ENCODE measurements at regions of chr11 and their contacts with region 1.

Region 1: DNA sequence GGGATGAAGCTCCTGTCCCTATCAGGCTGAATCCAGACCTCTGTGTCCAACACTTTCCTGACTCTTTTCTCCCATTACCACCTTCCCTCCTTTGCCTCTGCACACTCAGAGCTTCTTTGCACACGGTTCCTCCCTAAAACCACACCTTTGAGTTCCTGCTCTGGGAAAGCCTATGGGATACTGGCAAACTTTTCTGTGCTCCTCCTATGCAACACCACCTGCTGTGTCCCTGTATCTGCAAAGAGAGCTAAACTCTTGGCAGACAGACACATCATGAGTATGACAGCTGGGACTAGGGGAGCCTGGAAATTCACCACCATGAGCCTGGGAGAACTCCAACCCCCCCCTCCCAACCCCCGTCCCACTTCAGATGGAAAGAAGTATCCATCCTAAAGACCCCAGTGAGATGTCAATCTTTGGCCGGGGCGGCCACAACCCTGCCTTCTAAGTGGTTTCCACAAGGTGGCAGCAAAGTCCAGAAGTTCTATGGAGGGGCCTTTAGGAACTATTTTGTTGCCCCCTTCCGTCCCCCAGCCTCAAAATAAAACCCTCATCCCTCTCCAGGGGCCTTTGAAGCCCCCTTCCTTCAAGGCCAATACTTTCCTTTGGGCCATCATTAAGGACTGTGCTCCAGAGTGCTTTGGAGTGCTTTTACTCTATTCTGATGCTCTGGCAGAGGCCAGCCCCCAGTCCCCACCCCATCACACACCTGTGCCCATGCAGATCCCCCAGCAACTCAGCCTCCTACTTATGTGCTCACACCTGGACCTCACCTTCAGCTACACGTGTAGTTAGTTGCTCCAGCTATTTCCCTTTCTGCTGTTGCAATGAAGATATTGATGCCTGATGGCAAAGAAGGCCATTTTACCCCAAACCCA is 19.4 kb downstream of the HTR3A start:
- DNase-seq: no peak
- H3K4me3 ChIP-seq: no peak overlapping the region
- H3K27ac ChIP-seq: no peak overlapping the region
- H3K4me1 ChIP-seq: no peaks in the 10 kb centered on the region
- H3K27me3 ChIP-seq: no peaks in the 10 kb centered on the region
- CTCF ChIP-seq: peak; percentile 51 to 73

Region 2: DNA sequence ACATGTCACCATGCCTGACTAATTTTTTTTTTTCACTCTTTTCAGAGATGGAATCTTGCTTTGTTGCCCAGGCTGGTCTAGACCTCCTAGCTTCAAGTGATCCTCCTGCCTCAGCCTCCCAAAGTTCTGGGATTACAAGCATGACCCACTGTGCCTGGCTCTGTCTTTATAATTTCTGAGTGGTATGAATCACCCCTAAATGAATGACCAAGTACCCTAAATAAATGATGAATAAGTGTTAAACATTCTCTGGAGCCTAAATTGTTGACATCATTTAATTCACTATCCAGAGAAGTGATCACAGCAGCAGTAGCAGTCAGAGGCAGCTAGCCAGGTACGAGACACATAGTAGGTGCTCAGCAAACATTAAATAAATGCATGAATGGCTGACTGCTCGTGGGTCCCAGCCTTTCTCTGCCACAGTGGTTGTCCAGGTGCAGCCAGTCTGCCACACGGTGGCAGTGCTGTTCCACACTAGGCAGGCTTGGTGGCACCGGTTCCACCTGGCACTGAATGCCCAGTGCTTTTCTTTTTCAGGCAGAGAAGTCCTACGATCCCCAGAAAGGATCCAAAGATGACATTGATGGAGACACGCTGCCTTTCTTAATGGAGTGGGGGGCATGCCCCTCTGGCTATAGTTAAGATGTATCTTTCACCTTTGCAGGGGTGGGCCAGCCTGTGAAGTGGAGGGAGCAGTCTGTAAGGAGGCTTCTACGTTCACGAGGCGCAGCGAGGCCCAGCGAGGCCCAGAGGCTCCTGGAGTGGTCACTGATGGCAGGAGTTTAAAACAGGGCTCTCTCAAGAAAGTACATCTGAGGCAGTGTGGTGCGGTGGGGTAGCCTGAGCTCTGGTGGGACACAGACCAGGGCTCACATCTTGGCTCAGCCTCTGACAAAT is 688.6 kb before region 1 on chr11:
- CTCF ChIA-PET with region 1: no interaction called
- dilution Hi-C with region 1: no loop called
- in situ Hi-C with region 1: no loop called
- intact Hi-C with region 1: loop called (anchors 10 kb)
- DNase-seq: peak; percentile 61
- H3K4me3 ChIP-seq: no peak overlapping the region
- H3K27ac ChIP-seq: no peak overlapping the region
- H3K4me1 ChIP-seq: peaks cover 13% of the 10 kb centered on the region
- H3K27me3 ChIP-seq: no peaks in the 10 kb centered on the region
- CTCF ChIP-seq: peak; percentile 99

Region 3: DNA sequence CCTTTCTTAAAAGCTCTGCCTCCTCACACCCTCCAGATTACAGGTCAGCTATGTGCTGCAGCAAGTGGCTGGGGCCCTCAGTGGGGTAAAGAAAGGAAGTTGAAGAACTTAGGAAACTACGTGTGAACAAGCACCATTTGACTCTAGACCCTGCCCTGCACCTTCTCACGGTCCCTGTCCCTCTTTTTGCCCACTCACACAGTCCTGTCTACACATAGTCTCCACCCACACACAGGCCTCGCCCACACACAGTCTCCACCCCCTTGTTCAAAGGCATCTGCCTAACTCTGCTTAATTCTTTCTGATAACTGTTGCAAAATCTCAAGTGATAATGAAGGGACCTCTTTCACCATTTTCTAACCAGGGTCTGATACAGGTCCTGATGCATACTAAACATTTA is 347.2 kb before region 1 on chr11:
- CTCF ChIA-PET with region 1: no interaction called
- dilution Hi-C with region 1: no loop called
- in situ Hi-C with region 1: no loop called
- intact Hi-C with region 1: no loop called
- DNase-seq: no peak
- H3K4me3 ChIP-seq: no peak overlapping the region
- H3K27ac ChIP-seq: no peak overlapping the region
- H3K4me1 ChIP-seq: no peaks in the 10 kb centered on the region
- H3K27me3 ChIP-seq: no peaks in the 10 kb centered on the region
- CTCF ChIP-seq: no peak

Region 4: GRCh38 chr11:113896156-113896879 is 98.0 kb before region 1 on chr11:
- CTCF ChIA-PET with region 1: no interaction called
- dilution Hi-C with region 1: no loop called
- in situ Hi-C with region 1: no loop called
- intact Hi-C with region 1: loop called (anchors 10 kb)
- DNase-seq: no peak
- H3K4me3 ChIP-seq: no peak overlapping the region
- H3K27ac ChIP-seq: no peak overlapping the region
- H3K4me1 ChIP-seq: no peaks in the 10 kb centered on the region
- H3K27me3 ChIP-seq: no peaks in the 10 kb centered on the region
- CTCF ChIP-seq: peak; percentile 68 to 74

Region 5: DNA sequence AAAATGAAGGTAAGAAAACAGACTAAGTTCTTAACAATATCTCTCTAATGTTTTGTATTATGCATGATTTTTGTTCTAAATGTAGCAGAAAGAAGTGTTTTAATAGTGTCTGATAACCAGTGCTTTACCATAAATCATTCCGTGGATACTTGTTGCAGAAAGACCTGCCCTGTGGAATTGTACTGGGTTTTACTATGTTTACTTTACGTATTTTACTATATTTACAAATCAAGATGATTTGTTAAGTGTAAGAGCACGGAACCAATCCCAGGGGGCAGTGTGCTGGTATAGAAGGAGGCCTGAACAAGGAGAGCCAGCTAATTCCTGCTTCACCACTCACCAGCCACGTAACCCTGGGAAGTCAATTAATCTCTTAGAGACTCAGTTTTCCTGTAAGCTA is 88.3 kb before region 1 on chr11:
- CTCF ChIA-PET with region 1: no interaction called
- dilution Hi-C with region 1: loop called (anchors 5 kb)
- in situ Hi-C with region 1: no loop called
- intact Hi-C with region 1: no loop called
- DNase-seq: no peak
- H3K4me3 ChIP-seq: no peak overlapping the region
- H3K27ac ChIP-seq: no peak overlapping the region
- H3K4me1 ChIP-seq: no peaks in the 10 kb centered on the region
- H3K27me3 ChIP-seq: peaks cover 14% of the 10 kb centered on the region
- CTCF ChIP-seq: no peak

Region 6: GRCh38 chr11:114109206-114110090 is 115.1 kb after region 1 on chr11:
- CTCF ChIA-PET with region 1: no interaction called
- dilution Hi-C with region 1: no loop called
- in situ Hi-C with region 1: no loop called
- intact Hi-C with region 1: no loop called
- DNase-seq: no peak
- H3K4me3 ChIP-seq: no peak overlapping the region
- H3K27ac ChIP-seq: no peak overlapping the region
- H3K4me1 ChIP-seq: no peaks in the 10 kb centered on the region
- H3K27me3 ChIP-seq: peaks cover 7% of the 10 kb centered on the region
- CTCF ChIP-seq: no peak

Region 7: GRCh38 chr11:114159802-114160632 is 165.7 kb after region 1 on chr11:
- CTCF ChIA-PET with region 1: no interaction called
- dilution Hi-C with region 1: no loop called
- in situ Hi-C with region 1: no loop called
- intact Hi-C with region 1: no loop called
- DNase-seq: peak; percentile 97
- H3K4me3 ChIP-seq: peak overlapping the region; percentile 10 to 33 (median 26)
- H3K27ac ChIP-seq: peak overlapping the region; percentile 89
- H3K4me1 ChIP-seq: peaks cover 58% of the 10 kb centered on the region
- H3K27me3 ChIP-seq: no peaks in the 10 kb centered on the region
- CTCF ChIP-seq: no peak

Region 8: DNA sequence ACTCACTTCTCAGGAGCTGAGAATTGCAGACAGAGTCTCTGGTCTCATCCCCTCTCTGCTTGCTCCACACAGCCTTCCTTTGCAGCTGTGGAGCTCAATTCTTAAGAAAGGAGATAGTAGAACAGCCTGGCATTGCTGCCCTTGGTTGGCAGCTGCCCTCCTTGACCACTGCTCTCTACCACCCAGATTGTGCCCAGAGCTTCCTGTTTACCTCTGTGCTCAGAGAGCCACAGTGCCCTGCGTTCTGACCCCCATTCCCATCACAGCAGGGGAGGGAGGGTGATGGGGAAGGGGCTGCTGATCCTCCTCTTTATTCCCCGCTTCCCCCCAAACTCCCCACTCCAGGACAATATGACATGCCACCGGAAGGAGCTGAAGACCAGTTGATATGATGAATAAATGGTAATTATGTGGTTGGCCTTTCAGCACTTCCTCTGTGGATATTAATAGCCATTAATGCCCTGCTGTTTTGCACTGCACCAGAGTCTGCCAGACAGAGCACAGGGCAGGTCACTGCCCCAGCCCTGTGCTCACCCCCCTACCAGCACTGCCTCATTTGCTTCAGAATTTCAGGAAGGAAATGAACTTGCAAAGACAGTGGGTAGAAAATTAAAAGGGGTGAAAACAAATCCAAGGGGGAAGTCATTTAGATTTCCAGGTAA is 1936.7 kb after region 1 on chr11:
- CTCF ChIA-PET with region 1: no interaction called
- dilution Hi-C with region 1: no loop called
- in situ Hi-C with region 1: no loop called
- intact Hi-C with region 1: no loop called
- DNase-seq: no peak
- H3K4me3 ChIP-seq: no peak overlapping the region
- H3K27ac ChIP-seq: no peak overlapping the region
- H3K4me1 ChIP-seq: peaks cover 4% of the 10 kb centered on the region
- H3K27me3 ChIP-seq: no peaks in the 10 kb centered on the region
- CTCF ChIP-seq: no peak